Sigmoid colon (tissue), 7 donors: ENCODE measurements at regions of chr6 and their contacts with region 1.

Region 1: DNA sequence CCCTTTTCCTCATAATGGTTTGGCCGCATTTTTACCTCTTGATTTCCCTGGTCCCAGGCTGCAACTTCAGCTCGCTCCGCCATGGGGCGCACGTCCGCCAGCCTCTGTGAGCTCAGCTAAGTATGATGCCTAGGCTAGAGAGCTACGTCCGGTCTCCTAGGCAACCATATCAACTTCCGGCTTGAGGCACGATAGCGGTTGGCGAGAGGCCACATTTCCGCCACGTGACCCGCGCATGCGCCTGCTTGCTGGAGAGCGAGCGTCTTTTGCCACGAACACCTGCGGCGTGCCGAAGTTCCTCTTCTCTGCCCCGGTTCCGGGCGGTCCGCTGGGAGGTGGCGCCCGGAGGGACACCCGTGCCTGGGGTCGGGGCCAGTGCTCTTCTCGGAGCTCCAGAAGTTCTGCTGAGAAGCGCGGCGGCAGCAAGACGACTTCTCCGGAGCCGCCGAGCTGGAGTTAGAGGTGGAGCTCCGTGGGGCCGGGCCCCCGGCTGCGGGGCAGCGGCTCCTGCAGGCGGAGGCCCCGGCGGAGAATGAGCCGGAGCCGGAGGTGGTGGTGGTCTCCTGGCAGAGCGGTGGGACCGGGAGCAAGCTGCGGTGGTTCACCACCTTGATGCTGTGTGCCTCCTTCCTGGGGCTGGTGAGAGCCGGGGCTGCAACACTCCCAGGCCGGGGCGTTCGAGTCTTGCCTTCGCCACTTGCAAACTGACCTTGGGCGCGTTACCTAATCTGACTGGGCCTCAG is 172.0 kb downstream of the SLC16A10 start:
- DNase-seq: peak; percentile 99
- H3K4me3 ChIP-seq: peak overlapping the region; percentile 76 to 89 (median 80)
- H3K27ac ChIP-seq: peak overlapping the region; percentile 90 to 95 (median 92)
- H3K4me1 ChIP-seq: peaks cover 0 to 47% (median 17%) of the 10 kb centered on the region in 4 donors
- H3K27me3 ChIP-seq: peaks cover 0 to 6% (median 0%) of the 10 kb centered on the region in 3 donors
- CTCF ChIP-seq: peak; percentile 90 to 99 (median 95)
- EP300 ChIP-seq: peak in 1 of 4 donors; percentile 53
- POLR2A ChIP-seq: peak; percentile 44 to 67

Region 2: DNA sequence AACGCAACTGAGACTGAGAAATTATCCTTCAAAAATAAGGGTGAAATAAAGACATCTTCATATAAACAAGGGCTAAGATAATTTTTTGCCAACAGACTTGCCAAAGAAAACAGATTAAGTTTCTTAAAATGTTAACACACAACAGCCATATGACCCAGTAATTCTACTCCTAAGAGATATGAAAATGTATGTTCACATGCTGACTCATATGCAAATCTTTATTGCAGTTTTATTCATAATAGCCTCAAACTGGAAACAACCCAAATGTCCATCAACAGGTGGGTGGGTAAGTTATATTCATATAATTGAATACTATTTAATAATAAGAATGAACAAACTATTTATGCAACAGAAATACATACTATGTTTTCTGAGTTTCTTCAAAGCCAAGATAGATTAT is 83.7 kb after region 1 on chr6:
- intact Hi-C with region 1: loop called (anchors 10 kb)
- DNase-seq: no peak
- H3K4me3 ChIP-seq: no peak overlapping the region
- H3K27ac ChIP-seq: no peak overlapping the region
- H3K4me1 ChIP-seq: peaks cover 0 to 12% (median 0%) of the 10 kb centered on the region in 4 donors
- H3K27me3 ChIP-seq: no peaks in the 10 kb centered on the region
- CTCF ChIP-seq: no peak
- EP300 ChIP-seq: no peak
- POLR2A ChIP-seq: no peak

Region 3: GRCh38 chr6:111642463-111643158 is 383.4 kb after region 1 on chr6:
- intact Hi-C with region 1: loop called (anchors 5 kb)
- DNase-seq: peak; percentile 78
- H3K4me3 ChIP-seq: no peak overlapping the region
- H3K27ac ChIP-seq: no peak overlapping the region
- H3K4me1 ChIP-seq: peaks cover 0 to 16% (median 10%) of the 10 kb centered on the region in 4 donors
- H3K27me3 ChIP-seq: no peaks in the 10 kb centered on the region
- CTCF ChIP-seq: peak; percentile 29 to 59 (median 55)
- EP300 ChIP-seq: no peak
- POLR2A ChIP-seq: no peak

Region 4: GRCh38 chr6:111997078-111997852 is 738.0 kb after region 1 on chr6:
- intact Hi-C with region 1: loop called (anchors 5 kb)
- DNase-seq: peak; percentile 93
- H3K4me3 ChIP-seq: peak overlapping the region in 1 of 4 donors; percentile 1
- H3K27ac ChIP-seq: peak overlapping the region in 3 of 4 donors; percentile 19 to 55 (median 35)
- H3K4me1 ChIP-seq: peaks cover 0 to 10% (median 0%) of the 10 kb centered on the region in 4 donors
- H3K27me3 ChIP-seq: no peaks in the 10 kb centered on the region
- CTCF ChIP-seq: peak; percentile 83 to 94 (median 86)
- EP300 ChIP-seq: no peak
- POLR2A ChIP-seq: no peak

Region 5: GRCh38 chr6:112043032-112044007 is 784.1 kb after region 1 on chr6:
- intact Hi-C with region 1: loop called (anchors 1 kb)
- DNase-seq: peak; percentile 92
- H3K4me3 ChIP-seq: peak overlapping the region; percentile 32 to 61 (median 56)
- H3K27ac ChIP-seq: peak overlapping the region; percentile 77 to 84 (median 80)
- H3K4me1 ChIP-seq: peaks cover 0 to 35% (median 25%) of the 10 kb centered on the region in 4 donors
- H3K27me3 ChIP-seq: no peaks in the 10 kb centered on the region
- CTCF ChIP-seq: peak; percentile 86 to 94 (median 94)
- EP300 ChIP-seq: no peak
- POLR2A ChIP-seq: no peak